Psoas muscle (tissue), 8 donors: ENCODE measurements at regions of chr6 and their contacts with region 1.

Region 1: DNA sequence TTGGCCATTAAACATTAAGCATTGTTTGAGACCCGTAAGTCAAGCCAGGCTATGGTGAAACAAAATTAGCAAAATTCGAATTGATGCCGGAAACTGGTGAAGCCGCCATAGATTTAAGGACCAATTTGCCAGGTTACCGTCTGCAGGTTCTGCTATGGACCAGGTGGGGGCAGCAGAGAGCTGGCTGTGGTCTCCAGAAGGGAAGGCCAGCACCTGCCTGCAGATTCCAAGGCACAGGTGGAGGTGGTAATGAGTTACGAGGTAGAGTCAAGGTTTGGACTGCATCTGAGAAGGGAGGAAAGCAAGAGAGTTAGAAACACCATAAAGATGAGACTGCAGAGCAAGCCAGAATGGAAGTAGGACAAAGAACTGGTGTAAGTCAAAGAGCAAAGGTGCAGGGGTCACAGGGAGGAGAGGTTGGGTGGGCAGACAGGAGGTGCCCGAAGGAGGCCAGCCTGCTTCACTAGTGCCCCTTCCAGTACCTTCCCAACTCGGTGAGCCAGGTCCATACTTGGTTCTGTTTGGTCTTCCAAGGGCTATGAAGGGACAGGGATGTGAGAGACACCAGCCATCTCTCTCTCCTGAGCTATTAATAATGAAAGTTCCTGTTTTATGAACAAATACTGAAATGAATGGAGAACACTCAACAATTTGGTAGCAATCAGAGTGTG is 131.6 kb upstream of the ESR1 start:
- DNase-seq: no peak
- ATAC-seq: peak in 3 of 4 donors; percentile 54 to 73 (median 62)
- H3K4me3 ChIP-seq: no peak overlapping the region
- H3K27ac ChIP-seq: no peak overlapping the region
- H3K4me1 ChIP-seq: peaks cover 2% of the 10 kb centered on the region
- H3K27me3 ChIP-seq: no peaks in the 10 kb centered on the region
- CTCF ChIP-seq: peak; percentile 77

Region 2: GRCh38 chr6:151999194-151999593 is 323.3 kb after region 1 on chr6:
- intact Hi-C with region 1: no loop called
- DNase-seq: no peak
- ATAC-seq: no peak
- H3K4me3 ChIP-seq: no peak overlapping the region
- H3K27ac ChIP-seq: peak overlapping the region; percentile 44
- H3K4me1 ChIP-seq: peaks cover 32% of the 10 kb centered on the region
- H3K27me3 ChIP-seq: no peaks in the 10 kb centered on the region
- CTCF ChIP-seq: no peak

Region 3: GRCh38 chr6:152129691-152130151 is 453.8 kb after region 1 on chr6:
- intact Hi-C with region 1: loop called in 1 of 2 experiments (anchors 5 kb)
- DNase-seq: no peak
- ATAC-seq: peak in 3 of 4 donors; percentile 50 to 63 (median 58)
- H3K4me3 ChIP-seq: peak overlapping the region; percentile 54
- H3K27ac ChIP-seq: peak overlapping the region; percentile 72
- H3K4me1 ChIP-seq: peaks cover 12% of the 10 kb centered on the region
- H3K27me3 ChIP-seq: no peaks in the 10 kb centered on the region
- CTCF ChIP-seq: no peak